ENCODE measurements at regions of chr14 and their contacts with region 1.

Region 1: GRCh38 chr14:100375963-100376735 is 53.0 kb downstream of the SLC25A47 start:
- DNase-seq: peak; percentile 87 to 96 (median 90)
- ATAC-seq: peak; percentile 90
- H3K4me3 ChIP-seq: peak within 1 kb of the TSS; percentile 78
- H3K4me3 Mint-ChIP-seq: peak within 1 kb of the TSS; percentile 79 to 95 (median 93)
- H3K27ac ChIP-seq: peak within 1 kb of the TSS; percentile 75
- H3K27ac Mint-ChIP-seq: peak within 1 kb of the TSS; percentile 71 to 96 (median 91)
- H3K4me1 ChIP-seq: peaks cover 19 to 26% of the 10 kb centered on the region in 2 donors
- H3K4me1 Mint-ChIP-seq: peaks cover 23 to 52% (median 37%) of the 10 kb centered on the region in 7 donors
- H3K27me3 ChIP-seq: no peaks in the 10 kb centered on the region
- H3K27me3 Mint-ChIP-seq: no peaks in the 10 kb centered on the region

Region 2: DNA sequence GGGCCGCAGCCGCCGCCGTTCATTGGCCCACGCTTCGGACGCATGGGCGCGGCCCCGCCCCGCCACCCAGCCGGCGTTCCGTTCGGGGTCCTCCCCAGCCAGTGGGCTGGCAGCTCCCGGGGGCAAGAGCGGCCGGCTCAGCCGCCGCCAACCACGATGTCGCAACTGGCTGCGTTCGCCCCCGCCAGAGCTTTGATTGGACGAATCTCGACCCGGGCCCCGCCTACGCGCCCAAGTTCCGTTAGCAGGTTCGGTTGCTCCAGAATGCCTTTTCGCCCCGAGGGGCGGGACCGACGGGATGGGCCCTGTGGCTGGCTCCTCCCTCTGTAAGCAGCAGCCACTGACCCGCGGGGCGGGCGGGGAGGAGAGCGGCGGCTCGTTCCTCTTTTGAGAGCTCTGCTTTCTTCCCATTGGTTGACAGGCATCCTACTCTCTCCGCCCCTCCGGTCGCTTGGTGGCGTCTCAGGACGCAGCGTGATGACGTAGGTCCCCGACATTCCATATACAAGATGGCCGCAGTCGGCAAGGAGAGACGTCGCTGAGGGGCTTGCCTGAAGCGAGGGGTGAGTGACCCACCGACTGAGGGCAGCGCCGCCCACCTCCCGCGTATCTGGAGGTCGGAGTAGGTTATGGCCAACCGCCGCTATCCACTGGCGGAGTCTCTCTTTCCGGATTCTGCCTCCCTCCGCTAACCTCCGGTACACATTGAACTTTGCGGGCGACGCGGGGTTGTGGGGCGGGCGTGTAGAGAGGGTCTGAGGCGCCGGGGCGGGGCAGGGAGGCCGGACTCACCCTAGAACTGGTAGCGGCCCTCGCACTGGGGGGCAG is 895.0 kb before region 1 on chr14 and contains the start of gene CCNK:
- CTCF ChIA-PET with region 1: no interaction called
- POLR2A ChIA-PET with region 1: no interaction called
- intact Hi-C with region 1: loop called in 1 of 2 experiments (anchors 10 kb)
- DNase-seq: peak; percentile 98 to 100 (median 100)
- ATAC-seq: peak; percentile 92
- H3K4me3 ChIP-seq: peak within 1 kb of the TSS; percentile 86
- H3K4me3 Mint-ChIP-seq: peak within 1 kb of the TSS; percentile 89 to 100 (median 98)
- H3K27ac ChIP-seq: peak within 1 kb of the TSS; percentile 93
- H3K27ac Mint-ChIP-seq: peak within 1 kb of the TSS; percentile 95 to 99 (median 98)
- H3K4me1 ChIP-seq: peaks cover 26 to 34% of the 10 kb centered on the region in 2 donors
- H3K4me1 Mint-ChIP-seq: peaks cover 44 to 79% (median 70%) of the 10 kb centered on the region in 7 donors
- H3K27me3 ChIP-seq: no peaks in the 10 kb centered on the region
- H3K27me3 Mint-ChIP-seq: no peaks in the 10 kb centered on the region
- total RNA-seq, gene CCNK: 68.4 to 139 (median 81.9) TPM

Region 3: GRCh38 chr14:99729991-99730868 is 645.9 kb before region 1 on chr14:
- CTCF ChIA-PET with region 1: no interaction called
- POLR2A ChIA-PET with region 1: no interaction called
- intact Hi-C with region 1: loop called in 1 of 2 experiments (anchors 5 kb)
- DNase-seq: peak; percentile 26 to 85 (median 53)
- ATAC-seq: peak; percentile 71
- H3K4me3 ChIP-seq: no peak overlapping the region
- H3K4me3 Mint-ChIP-seq: peak overlapping the region in 8 of 10 donors; percentile 13 to 75 (median 50)
- H3K27ac ChIP-seq: no peak overlapping the region
- H3K27ac Mint-ChIP-seq: no peak overlapping the region
- H3K4me1 ChIP-seq: no peaks in the 10 kb centered on the region
- H3K4me1 Mint-ChIP-seq: peaks cover 0 to 6% (median 0%) of the 10 kb centered on the region in 7 donors
- H3K27me3 ChIP-seq: no peaks in the 10 kb centered on the region
- H3K27me3 Mint-ChIP-seq: peaks cover 7 to 45% (median 20%) of the 10 kb centered on the region in 5 donors

Region 4: GRCh38 chr14:100037353-100037752 is 338.8 kb before region 1 on chr14:
- CTCF ChIA-PET with region 1: no interaction called
- POLR2A ChIA-PET with region 1: no interaction called
- intact Hi-C with region 1: no loop called
- DNase-seq: no peak
- ATAC-seq: no peak
- H3K4me3 ChIP-seq: no peak overlapping the region
- H3K4me3 Mint-ChIP-seq: no peak overlapping the region
- H3K27ac ChIP-seq: no peak overlapping the region
- H3K27ac Mint-ChIP-seq: peak overlapping the region in 2 of 9 donors; percentile 3 to 84
- H3K4me1 ChIP-seq: no peaks in the 10 kb centered on the region
- H3K4me1 Mint-ChIP-seq: peaks cover 1 to 8% (median 6%) of the 10 kb centered on the region in 7 donors
- H3K27me3 ChIP-seq: no peaks in the 10 kb centered on the region
- H3K27me3 Mint-ChIP-seq: no peaks in the 10 kb centered on the region

Region 5: GRCh38 chr14:100056964-100057795 is 319.0 kb before region 1 on chr14:
- CTCF ChIA-PET with region 1: no interaction called
- POLR2A ChIA-PET with region 1: no interaction called
- intact Hi-C with region 1: loop called in 1 of 2 experiments (anchors 1 kb)
- DNase-seq: peak in 7 of 9 donors; percentile 62 to 76 (median 67)
- ATAC-seq: peak; percentile 83
- H3K4me3 ChIP-seq: no peak overlapping the region
- H3K4me3 Mint-ChIP-seq: peak overlapping the region; percentile 35 to 79 (median 72)
- H3K27ac ChIP-seq: peak overlapping the region; percentile 33
- H3K27ac Mint-ChIP-seq: peak overlapping the region; percentile 83 to 96 (median 94)
- H3K4me1 ChIP-seq: peaks cover 49% of the 10 kb centered on the region in 2 donors
- H3K4me1 Mint-ChIP-seq: peaks cover 37 to 70% (median 60%) of the 10 kb centered on the region in 7 donors
- H3K27me3 ChIP-seq: no peaks in the 10 kb centered on the region
- H3K27me3 Mint-ChIP-seq: no peaks in the 10 kb centered on the region

Region 6: GRCh38 chr14:100221533-100222223 is 154.5 kb before region 1 on chr14:
- CTCF ChIA-PET with region 1: no interaction called
- POLR2A ChIA-PET with region 1: no interaction called
- intact Hi-C with region 1: loop called in 1 of 2 experiments (anchors 5 kb)
- DNase-seq: peak; percentile 22 to 81 (median 74)
- ATAC-seq: peak; percentile 95
- H3K4me3 ChIP-seq: peak overlapping the region; percentile 88
- H3K4me3 Mint-ChIP-seq: no peak overlapping the region
- H3K27ac ChIP-seq: peak overlapping the region; percentile 77
- H3K27ac Mint-ChIP-seq: no peak overlapping the region
- H3K4me1 ChIP-seq: peaks cover 31 to 36% of the 10 kb centered on the region in 2 donors
- H3K4me1 Mint-ChIP-seq: peaks cover 11 to 20% (median 13%) of the 10 kb centered on the region in 7 donors
- H3K27me3 ChIP-seq: no peaks in the 10 kb centered on the region
- H3K27me3 Mint-ChIP-seq: no peaks in the 10 kb centered on the region

Region 7: GRCh38 chr14:100285021-100285912 is 90.9 kb before region 1 on chr14:
- CTCF ChIA-PET with region 1: no interaction called
- POLR2A ChIA-PET with region 1: interaction called, 3 read pairs
- intact Hi-C with region 1: loop called (anchors 1 kb)
- DNase-seq: peak; percentile 71 to 92 (median 79)
- ATAC-seq: peak; percentile 97
- H3K4me3 ChIP-seq: peak overlapping the region; percentile 71
- H3K4me3 Mint-ChIP-seq: peak overlapping the region; percentile 27 to 91 (median 73)
- H3K27ac ChIP-seq: peak overlapping the region; percentile 85
- H3K27ac Mint-ChIP-seq: peak overlapping the region in 5 of 9 donors; percentile 9 to 87 (median 59)
- H3K4me1 ChIP-seq: peaks cover 0 to 6% of the 10 kb centered on the region in 2 donors
- H3K4me1 Mint-ChIP-seq: peaks cover 2 to 21% (median 8%) of the 10 kb centered on the region in 7 donors
- H3K27me3 ChIP-seq: no peaks in the 10 kb centered on the region
- H3K27me3 Mint-ChIP-seq: no peaks in the 10 kb centered on the region

Region 8: GRCh38 chr14:101875727-101876554 is 1499.8 kb after region 1 on chr14:
- CTCF ChIA-PET with region 1: no interaction called
- POLR2A ChIA-PET with region 1: no interaction called
- intact Hi-C with region 1: no loop called
- DNase-seq: peak in 3 of 9 donors; percentile 13 to 26 (median 24)
- ATAC-seq: no peak
- H3K4me3 ChIP-seq: no peak overlapping the region
- H3K4me3 Mint-ChIP-seq: peak overlapping the region; percentile 63 to 87 (median 76)
- H3K27ac ChIP-seq: peak overlapping the region; percentile 72
- H3K27ac Mint-ChIP-seq: peak overlapping the region; percentile 72 to 95 (median 89)
- H3K4me1 ChIP-seq: peaks cover 24 to 54% of the 10 kb centered on the region in 2 donors
- H3K4me1 Mint-ChIP-seq: peaks cover 46 to 97% (median 80%) of the 10 kb centered on the region in 7 donors
- H3K27me3 ChIP-seq: no peaks in the 10 kb centered on the region
- H3K27me3 Mint-ChIP-seq: no peaks in the 10 kb centered on the region